ENCODE measurements at regions of chr6 and their contacts with region 1.

Region 1: GRCh38 chr6:164695896-164696295 is 613.5 kb downstream of the C6orf118 start:
- DNase-seq: peak; percentile 39
- H3K4me3 ChIP-seq: no peak overlapping the region
- H3K27ac ChIP-seq: peak overlapping the region; percentile 31
- H3K4me1 ChIP-seq: peaks cover 18% of the 10 kb centered on the region
- H3K27me3 ChIP-seq: no peaks in the 10 kb centered on the region
- CTCF ChIP-seq: no peak
- POLR2A ChIP-seq: no peak

Region 2: GRCh38 chr6:164331026-164331425 is 364.9 kb before region 1 on chr6:
- CTCF ChIA-PET with region 1: no interaction called
- POLR2A ChIA-PET with region 1: no interaction called
- dilution Hi-C with region 1: no loop called
- intact Hi-C with region 1: loop called (anchors 5 kb)
- DNase-seq: peak; percentile 54
- H3K4me3 ChIP-seq: no peak overlapping the region
- H3K27ac ChIP-seq: no peak overlapping the region
- H3K4me1 ChIP-seq: peaks cover 12% of the 10 kb centered on the region
- H3K27me3 ChIP-seq: no peaks in the 10 kb centered on the region
- CTCF ChIP-seq: no peak
- POLR2A ChIP-seq: no peak

Region 3: GRCh38 chr6:164731539-164731938 is 35.6 kb after region 1 on chr6:
- CTCF ChIA-PET with region 1: no interaction called
- POLR2A ChIA-PET with region 1: no interaction called
- dilution Hi-C with region 1: no loop called
- intact Hi-C with region 1: loop called (anchors 5 kb)
- DNase-seq: no peak
- H3K4me3 ChIP-seq: no peak overlapping the region
- H3K27ac ChIP-seq: no peak overlapping the region
- H3K4me1 ChIP-seq: no peaks in the 10 kb centered on the region
- H3K27me3 ChIP-seq: no peaks in the 10 kb centered on the region
- CTCF ChIP-seq: no peak
- POLR2A ChIP-seq: no peak